ENCODE measurements at regions of chr1 and their contacts with region 1.

Region 1: DNA sequence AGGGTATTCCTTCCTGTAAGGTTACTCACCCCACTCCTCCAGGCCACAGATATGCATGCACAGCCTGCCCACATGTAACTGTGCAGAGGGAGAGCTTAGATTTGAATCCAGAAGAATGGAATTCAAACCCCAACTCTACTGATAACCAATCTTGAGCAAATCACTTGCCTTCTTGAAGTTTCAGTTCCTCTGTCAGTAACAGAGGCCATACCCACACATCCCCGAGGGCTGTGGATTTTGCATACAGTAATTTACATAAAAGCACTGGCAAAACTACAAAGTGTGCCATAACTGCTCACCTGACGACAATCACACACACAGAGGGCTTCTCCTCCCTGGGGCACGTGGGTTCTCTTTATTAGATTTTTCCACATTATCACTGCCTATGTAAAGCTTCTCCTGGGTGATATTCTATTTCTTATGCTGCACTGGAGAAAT is 18.6 kb downstream of the CD247 start:
- DNase-seq: peak; percentile 56
- ATAC-seq: peak; percentile 57
- H3K4me3 Mint-ChIP-seq: peak overlapping the region; percentile 42
- H3K27ac Mint-ChIP-seq: peak overlapping the region; percentile 95
- H3K4me1 Mint-ChIP-seq: peaks cover 99% of the 10 kb centered on the region
- H3K27me3 Mint-ChIP-seq: no peaks in the 10 kb centered on the region

Region 2: DNA sequence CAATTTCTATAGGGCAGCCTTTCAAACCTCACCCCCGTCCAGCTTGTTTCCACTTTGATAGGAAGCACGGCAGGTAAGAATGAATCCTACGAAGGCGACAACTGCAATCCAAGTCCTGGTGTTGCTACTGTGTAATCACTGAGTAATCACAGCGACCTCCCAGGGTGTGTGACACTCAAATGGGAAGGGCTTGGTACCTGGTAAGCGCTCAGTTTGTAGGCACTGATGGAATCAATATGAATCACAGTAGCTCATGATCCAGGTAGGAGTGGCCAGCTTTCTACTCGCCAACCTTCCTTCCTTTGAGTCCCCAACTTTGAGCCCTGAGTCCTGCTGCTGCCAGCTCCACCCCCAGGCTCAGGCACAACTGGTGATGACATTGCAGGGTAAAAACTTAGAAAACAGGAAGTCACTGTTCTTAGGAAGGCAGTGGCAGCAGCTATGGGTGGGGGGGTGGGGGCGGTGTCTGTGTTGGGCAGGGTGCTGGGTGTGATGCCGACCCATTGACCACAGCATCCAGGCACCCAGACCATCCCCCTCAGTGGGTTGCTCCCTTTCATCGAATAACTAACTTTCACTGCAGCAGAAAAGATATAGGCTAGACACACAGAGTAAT is 52.1 kb before region 1 on chr1:
- CTCF ChIA-PET with region 1: interaction called, 7 read pairs
- POLR2A ChIA-PET with region 1: interaction called, 17 read pairs
- intact Hi-C with region 1: loop called in 1 of 2 experiments (anchors 1 kb)
- DNase-seq: peak; percentile 87
- ATAC-seq: peak; percentile 86
- H3K4me3 Mint-ChIP-seq: peak overlapping the region; percentile 56
- H3K27ac Mint-ChIP-seq: peak overlapping the region; percentile 94
- H3K4me1 Mint-ChIP-seq: peaks cover 86% of the 10 kb centered on the region
- H3K27me3 Mint-ChIP-seq: no peaks in the 10 kb centered on the region

Region 3: GRCh38 chr1:167454894-167455785 is 44.5 kb before region 1 on chr1:
- CTCF ChIA-PET with region 1: interaction called, 11 read pairs
- POLR2A ChIA-PET with region 1: interaction called, 17 read pairs
- intact Hi-C with region 1: loop called (anchors 1 to 2 kb)
- DNase-seq: peak; percentile 88
- ATAC-seq: peak; percentile 58
- H3K4me3 Mint-ChIP-seq: peak overlapping the region; percentile 75
- H3K27ac Mint-ChIP-seq: peak overlapping the region; percentile 86
- H3K4me1 Mint-ChIP-seq: peaks cover 78% of the 10 kb centered on the region
- H3K27me3 Mint-ChIP-seq: no peaks in the 10 kb centered on the region

Region 4: DNA sequence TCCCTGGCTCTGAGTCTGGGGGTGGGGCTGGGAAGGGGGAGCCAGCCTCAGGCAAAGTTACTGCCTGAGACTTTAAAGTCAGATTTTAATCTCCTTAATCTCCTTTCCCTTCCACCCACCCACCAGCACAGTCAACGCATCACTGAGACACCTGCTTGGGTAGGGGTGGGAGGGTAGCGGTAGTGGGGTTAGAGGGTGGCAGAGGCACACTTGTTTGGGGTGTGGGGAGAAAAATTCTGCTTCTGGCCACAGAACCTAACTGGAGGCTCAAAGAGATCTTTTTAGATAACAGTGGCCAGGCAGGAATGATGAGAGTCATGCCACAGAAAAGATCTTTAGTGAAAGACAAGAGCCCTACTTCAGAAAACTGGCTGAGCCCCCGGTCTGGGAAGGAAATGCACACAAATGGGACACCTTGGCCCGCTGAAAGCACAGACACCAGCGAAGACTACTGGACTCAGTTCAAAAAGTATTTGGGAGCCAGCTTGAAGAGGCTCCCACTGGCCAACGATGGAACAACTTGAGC is 25.4 kb before region 1 on chr1:
- CTCF ChIA-PET with region 1: interaction called, 8 read pairs
- POLR2A ChIA-PET with region 1: interaction called, 11 read pairs
- intact Hi-C with region 1: no loop called
- DNase-seq: peak; percentile 68
- ATAC-seq: peak; percentile 69
- H3K4me3 Mint-ChIP-seq: peak overlapping the region; percentile 42
- H3K27ac Mint-ChIP-seq: peak overlapping the region; percentile 81
- H3K4me1 Mint-ChIP-seq: peaks cover 85% of the 10 kb centered on the region
- H3K27me3 Mint-ChIP-seq: no peaks in the 10 kb centered on the region

Region 5: DNA sequence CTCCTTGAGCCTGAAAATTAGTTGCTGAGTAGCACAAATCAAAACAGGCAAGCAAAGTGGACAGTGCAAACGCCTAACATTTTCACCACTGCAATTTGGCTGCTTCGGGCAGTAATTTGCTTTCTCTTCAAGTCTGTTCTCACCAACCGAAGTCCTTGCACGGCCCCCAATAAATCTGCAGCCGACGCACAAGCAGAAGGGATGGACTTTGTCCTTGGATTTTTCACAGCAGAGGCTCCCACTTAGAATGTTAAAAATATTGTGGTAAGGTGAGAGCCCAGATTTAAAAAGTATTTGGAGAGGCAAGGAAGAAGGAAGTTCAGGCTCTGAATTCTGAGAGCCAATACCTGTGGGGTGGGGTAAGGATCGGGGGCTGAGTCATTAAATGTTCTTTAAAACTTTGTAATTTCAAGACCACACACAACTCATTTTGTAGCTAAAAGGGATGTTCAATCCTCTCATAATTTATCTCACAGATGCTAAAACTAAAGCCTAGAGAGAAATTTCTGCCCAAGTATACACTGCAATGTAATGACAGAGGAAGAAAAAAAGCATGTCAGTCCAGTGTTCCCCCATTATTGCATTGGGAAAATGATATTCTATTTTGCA is 12.5 kb after region 1 on chr1:
- CTCF ChIA-PET with region 1: interaction called, 62 read pairs
- POLR2A ChIA-PET with region 1: interaction called, 57 read pairs
- intact Hi-C with region 1: loop called (anchors 1 kb)
- DNase-seq: peak; percentile 45
- ATAC-seq: peak; percentile 28
- H3K4me3 Mint-ChIP-seq: peak overlapping the region; percentile 68
- H3K27ac Mint-ChIP-seq: peak overlapping the region; percentile 73
- H3K4me1 Mint-ChIP-seq: peaks cover 77% of the 10 kb centered on the region
- H3K27me3 Mint-ChIP-seq: no peaks in the 10 kb centered on the region

Region 6: GRCh38 chr1:167517535-167518330 is 18.1 kb after region 1 on chr1:
- CTCF ChIA-PET with region 1: interaction called, 62 read pairs
- POLR2A ChIA-PET with region 1: interaction called, 57 read pairs
- intact Hi-C with region 1: loop called (anchors 1 kb)
- DNase-seq: peak; percentile 97
- ATAC-seq: peak; percentile 88
- H3K4me3 Mint-ChIP-seq: peak overlapping the region; percentile 90
- H3K27ac Mint-ChIP-seq: peak overlapping the region; percentile 99
- H3K4me1 Mint-ChIP-seq: peaks cover 43% of the 10 kb centered on the region
- H3K27me3 Mint-ChIP-seq: no peaks in the 10 kb centered on the region

Region 7: GRCh38 chr1:167627865-167628641 is 128.4 kb after region 1 on chr1:
- CTCF ChIA-PET with region 1: no interaction called
- POLR2A ChIA-PET with region 1: interaction called, 4 read pairs
- intact Hi-C with region 1: loop called in 1 of 2 experiments (anchors 5 kb)
- DNase-seq: peak; percentile 87
- ATAC-seq: peak; percentile 85
- H3K4me3 Mint-ChIP-seq: peak overlapping the region; percentile 85
- H3K27ac Mint-ChIP-seq: peak overlapping the region; percentile 98
- H3K4me1 Mint-ChIP-seq: peaks cover 53% of the 10 kb centered on the region
- H3K27me3 Mint-ChIP-seq: no peaks in the 10 kb centered on the region